Activated T-helper 1 cell treated with anti-CD3 and anti-CD28 coated beads, Interleukin-12 subunit alpha, Interleukin-12 subunit beta, Interleukin-2, Interleukin-4 antibody, amounts not matched to agents 30 ng/mL and 10 ng/mL and 1 ng/mL, durations not matched to agents 14 hours and 24 hours and 36 hours (primary cell): ENCODE measurements at regions of chr6 and their contacts with region 1.

Region 1: DNA sequence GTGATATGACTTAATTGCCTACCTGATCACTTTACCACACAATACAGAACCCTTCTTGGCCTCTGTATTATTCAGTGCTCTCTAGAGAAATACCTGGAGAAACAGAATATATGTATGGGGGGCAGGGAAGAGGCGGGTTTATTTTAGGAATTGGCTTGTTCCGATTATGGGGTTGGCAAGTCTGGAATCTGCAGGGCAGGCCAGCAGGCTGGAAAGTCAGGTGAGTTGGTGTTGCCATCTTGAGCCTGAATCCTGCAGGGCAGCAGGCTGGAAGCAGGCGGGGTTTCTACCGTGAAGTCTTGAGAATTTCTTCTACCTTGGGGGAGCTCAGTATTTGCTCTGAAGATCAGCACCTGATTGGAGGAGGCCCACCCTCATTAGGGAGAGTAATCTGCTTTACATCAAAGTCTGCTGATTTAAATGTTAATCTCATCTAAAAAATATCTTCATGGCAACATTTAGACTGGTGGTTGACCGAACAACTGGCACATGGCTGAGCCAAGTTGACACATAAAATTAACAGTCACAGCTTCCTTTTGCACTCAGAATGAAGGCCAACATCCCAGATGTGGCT is 193.9 kb downstream of the ZDHHC14 start:
- DNase-seq: no peak
- H3K4me3 Mint-ChIP-seq: no peak overlapping the region
- H3K27ac Mint-ChIP-seq: no peak overlapping the region
- H3K4me1 Mint-ChIP-seq: peaks cover 13% of the 10 kb centered on the region
- H3K27me3 Mint-ChIP-seq: peaks cover 2% of the 10 kb centered on the region

Region 2: DNA sequence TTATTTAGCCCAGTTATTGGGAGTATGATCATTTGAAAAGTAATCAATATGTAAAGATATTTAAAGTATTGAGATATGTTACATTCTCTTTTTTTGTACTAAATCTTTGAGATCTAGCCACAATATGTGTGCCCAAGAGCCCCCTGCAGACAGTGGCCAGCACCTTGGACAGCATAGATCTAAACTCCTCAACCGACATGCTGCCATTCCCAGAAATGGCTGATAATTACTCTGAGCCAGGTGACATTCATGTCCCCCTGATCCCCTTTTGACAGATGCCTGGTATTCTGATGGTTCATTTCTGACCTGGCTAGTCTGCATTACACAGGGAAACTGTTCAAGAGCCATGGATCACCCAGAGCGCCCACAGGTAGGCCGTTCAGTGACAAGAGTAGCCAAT is 16.9 kb before region 1 on chr6:
- intact Hi-C with region 1: loop called (anchors 2 kb)
- DNase-seq: no peak
- H3K4me3 Mint-ChIP-seq: no peak overlapping the region
- H3K27ac Mint-ChIP-seq: peak overlapping the region; percentile 66
- H3K4me1 Mint-ChIP-seq: peaks cover 53% of the 10 kb centered on the region
- H3K27me3 Mint-ChIP-seq: peaks cover 12% of the 10 kb centered on the region